Activated CD4-positive, alpha-beta memory T cell treated with anti-CD3 and anti-CD28 coated beads for 36 hours (primary cell): ENCODE measurements at regions of chr16 and their contacts with region 1.

Region 1: DNA sequence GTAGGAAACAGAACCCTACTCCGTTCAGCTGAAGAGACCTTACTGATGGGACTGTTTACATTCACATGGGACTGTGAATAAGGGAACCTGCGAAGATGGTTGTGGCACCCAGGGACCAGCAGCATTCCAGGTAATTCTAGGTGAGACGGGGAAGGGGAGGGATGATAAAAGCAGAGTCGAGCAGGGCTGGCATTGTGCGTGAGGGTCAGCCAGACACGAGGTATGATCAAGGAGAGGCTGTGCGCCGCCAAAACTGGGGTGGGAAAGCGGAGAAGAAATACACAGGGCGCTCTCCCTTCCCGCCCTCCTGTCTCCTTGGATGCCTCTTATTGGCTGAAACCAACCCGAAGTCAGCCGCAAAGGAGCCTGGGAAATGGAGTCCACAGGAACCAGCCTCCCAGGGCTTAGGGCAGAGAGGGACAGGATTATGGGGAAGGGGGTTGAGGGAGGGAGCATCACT is 38.4 kb upstream of the CSNK2A2 start:
- DNase-seq: peak; percentile 78
- H3K4me3 Mint-ChIP-seq: peak overlapping the region; percentile 74
- H3K27ac Mint-ChIP-seq: no peak overlapping the region
- H3K4me1 Mint-ChIP-seq: peaks cover 5% of the 10 kb centered on the region
- H3K27me3 Mint-ChIP-seq: peaks cover 25% of the 10 kb centered on the region

Region 2: GRCh38 chr16:58198022-58198683 is 38.1 kb before region 1 on chr16 and contains the start of gene CSNK2A2:
- CTCF ChIA-PET with region 1: interaction called, 3 read pairs
- POLR2A ChIA-PET with region 1: no interaction called
- intact Hi-C with region 1: loop called (anchors 2 kb)
- DNase-seq: peak; percentile 76
- H3K4me3 Mint-ChIP-seq: peak within 1 kb of the TSS; percentile 89
- H3K27ac Mint-ChIP-seq: peak within 1 kb of the TSS; percentile 54
- H3K4me1 Mint-ChIP-seq: peaks cover 33% of the 10 kb centered on the region
- H3K27me3 Mint-ChIP-seq: peaks cover 8% of the 10 kb centered on the region
- total RNA-seq, gene CSNK2A2: 76.9 to 82.0 TPM

Region 3: GRCh38 chr16:58249780-58250478 is 13.7 kb after region 1 on chr16:
- CTCF ChIA-PET with region 1: interaction called, 3 read pairs
- POLR2A ChIA-PET with region 1: no interaction called
- intact Hi-C with region 1: loop called (anchors 1 kb)
- DNase-seq: peak; percentile 90
- H3K4me3 Mint-ChIP-seq: peak overlapping the region; percentile 88
- H3K27ac Mint-ChIP-seq: no peak overlapping the region
- H3K4me1 Mint-ChIP-seq: peaks cover 13% of the 10 kb centered on the region
- H3K27me3 Mint-ChIP-seq: peaks cover under 1% of the 10 kb centered on the region

Region 4: GRCh38 chr16:58392215-58393137 is 156.2 kb after region 1 on chr16 and contains the start of gene GINS3:
- CTCF ChIA-PET with region 1: no interaction called
- POLR2A ChIA-PET with region 1: no interaction called
- intact Hi-C with region 1: loop called (anchors 5 kb)
- DNase-seq: peak; percentile 92
- H3K4me3 Mint-ChIP-seq: peak within 1 kb of the TSS; percentile 95
- H3K27ac Mint-ChIP-seq: peak within 1 kb of the TSS; percentile 96
- H3K4me1 Mint-ChIP-seq: peaks cover 11% of the 10 kb centered on the region
- H3K27me3 Mint-ChIP-seq: no peaks in the 10 kb centered on the region
- total RNA-seq, gene GINS3: 13.8 to 14.0 TPM